Psoas muscle (tissue), 8 donors: ENCODE measurements at regions of chr3 and their contacts with region 1.

Region 1: GRCh38 chr3:71583566-71584449 is at the start of gene FOXP1:
- DNase-seq: peak; percentile 78 to 88
- ATAC-seq: peak; percentile 79 to 86 (median 82)
- H3K4me3 ChIP-seq: peak within 1 kb of the TSS; percentile 95
- H3K27ac ChIP-seq: peak within 1 kb of the TSS; percentile 93
- H3K4me1 ChIP-seq: peaks cover 26% of the 10 kb centered on the region
- H3K27me3 ChIP-seq: no peaks in the 10 kb centered on the region
- CTCF ChIP-seq: no peak
- total RNA-seq, gene FOXP1: 15.4 to 26.4 (median 19.6) TPM

Region 2: DNA sequence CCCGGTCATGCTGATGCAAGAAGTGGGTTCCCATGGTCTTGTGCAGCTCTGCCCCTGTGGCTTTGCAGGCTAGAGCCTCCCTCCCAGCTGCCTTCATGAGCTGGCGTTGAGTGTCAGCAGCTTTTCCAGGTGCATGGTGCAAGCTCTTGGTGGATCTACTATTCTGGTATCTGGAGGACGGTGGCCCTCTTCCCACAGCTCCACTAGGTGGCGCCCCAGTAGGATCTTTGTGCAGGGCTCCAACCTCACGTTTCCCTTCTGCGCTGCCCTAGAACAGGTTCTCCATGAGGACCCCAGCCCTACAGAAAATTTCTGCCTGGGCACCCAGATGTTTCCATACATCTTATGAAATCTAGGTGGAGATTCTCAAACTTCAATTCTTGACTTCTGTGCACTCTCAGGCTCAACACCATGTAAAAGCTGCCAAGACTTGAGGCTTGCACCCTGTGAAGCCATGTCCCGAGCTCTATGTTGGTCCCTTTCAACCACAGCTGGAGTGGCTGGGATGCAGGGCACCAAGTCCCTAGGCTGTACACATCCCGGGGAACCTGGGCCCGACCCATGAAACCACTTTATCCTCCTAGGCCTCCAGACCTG is 1033.0 kb before region 1 on chr3:
- intact Hi-C with region 1: loop called (anchors 5 to 10 kb)
- DNase-seq: peak; percentile 65 to 75
- ATAC-seq: peak in 3 of 4 donors; percentile 55 to 81 (median 68)
- H3K4me3 ChIP-seq: no peak overlapping the region
- H3K27ac ChIP-seq: no peak overlapping the region
- H3K4me1 ChIP-seq: no peaks in the 10 kb centered on the region
- H3K27me3 ChIP-seq: no peaks in the 10 kb centered on the region
- CTCF ChIP-seq: peak; percentile 65

Region 3: GRCh38 chr3:71006810-71007785 is 576.7 kb before region 1 on chr3:
- intact Hi-C with region 1: loop called (anchors 1 to 5 kb)
- DNase-seq: no peak
- ATAC-seq: peak in 3 of 4 donors; percentile 60 to 82 (median 76)
- H3K4me3 ChIP-seq: no peak overlapping the region
- H3K27ac ChIP-seq: peak overlapping the region; percentile 68
- H3K4me1 ChIP-seq: peaks cover 32% of the 10 kb centered on the region
- H3K27me3 ChIP-seq: no peaks in the 10 kb centered on the region
- CTCF ChIP-seq: peak; percentile 52

Region 4: GRCh38 chr3:71247221-71247976 is 336.4 kb before region 1 on chr3:
- intact Hi-C with region 1: loop called in 1 of 2 experiments (anchors 10 kb)
- DNase-seq: no peak
- ATAC-seq: peak in 2 of 4 donors; percentile 50 to 68
- H3K4me3 ChIP-seq: no peak overlapping the region
- H3K27ac ChIP-seq: no peak overlapping the region
- H3K4me1 ChIP-seq: peaks cover 5% of the 10 kb centered on the region
- H3K27me3 ChIP-seq: no peaks in the 10 kb centered on the region
- CTCF ChIP-seq: no peak

Region 5: DNA sequence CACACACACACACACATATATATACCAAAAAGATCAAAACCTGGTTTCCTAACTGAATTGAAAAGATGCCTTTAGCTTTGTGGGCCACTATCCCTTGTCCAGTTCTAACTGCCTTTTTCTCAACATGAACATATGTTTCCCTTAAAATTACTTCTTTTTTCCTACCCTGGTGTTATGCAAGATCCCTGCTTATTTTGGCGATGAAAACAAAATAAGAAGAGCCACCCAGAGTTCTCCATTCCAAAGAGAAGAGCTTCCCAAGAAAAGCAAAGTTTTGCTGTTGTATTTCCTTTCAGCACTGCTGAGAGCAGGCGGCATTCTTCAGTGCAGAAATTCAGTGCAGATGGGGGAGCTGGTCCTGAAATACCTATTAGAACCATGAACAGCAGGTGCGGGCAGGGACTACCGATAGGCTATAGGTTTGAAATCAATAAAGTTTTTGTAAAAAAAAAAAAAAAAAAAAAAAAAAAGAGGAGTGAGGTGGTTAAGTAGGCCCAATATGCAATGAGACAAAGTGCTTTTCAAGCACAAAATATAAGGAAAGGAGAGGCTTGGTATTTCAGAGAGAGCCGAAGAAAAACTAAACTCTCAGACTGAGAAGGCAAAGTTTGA is 238.3 kb before region 1 on chr3:
- intact Hi-C with region 1: no loop called
- DNase-seq: no peak
- ATAC-seq: no peak
- H3K4me3 ChIP-seq: no peak overlapping the region
- H3K27ac ChIP-seq: no peak overlapping the region
- H3K4me1 ChIP-seq: no peaks in the 10 kb centered on the region
- H3K27me3 ChIP-seq: no peaks in the 10 kb centered on the region
- CTCF ChIP-seq: no peak

Region 6: GRCh38 chr3:71389911-71390573 is 193.8 kb before region 1 on chr3:
- intact Hi-C with region 1: loop called in 1 of 2 experiments (anchors 5 kb)
- DNase-seq: peak; percentile 18 to 55
- ATAC-seq: peak in 3 of 4 donors; percentile 21 to 84 (median 77)
- H3K4me3 ChIP-seq: peak overlapping the region; percentile 21
- H3K27ac ChIP-seq: peak overlapping the region; percentile 50
- H3K4me1 ChIP-seq: peaks cover 17% of the 10 kb centered on the region
- H3K27me3 ChIP-seq: no peaks in the 10 kb centered on the region
- CTCF ChIP-seq: no peak

Region 7: GRCh38 chr3:71542521-71543370 is 41.1 kb before region 1 on chr3:
- intact Hi-C with region 1: loop called in 1 of 2 experiments (anchors 5 kb)
- DNase-seq: peak; percentile 81 to 90
- ATAC-seq: peak; percentile 99 to 100 (median 100)
- H3K4me3 ChIP-seq: peak overlapping the region; percentile 48
- H3K27ac ChIP-seq: peak overlapping the region; percentile 73
- H3K4me1 ChIP-seq: peaks cover 17% of the 10 kb centered on the region
- H3K27me3 ChIP-seq: no peaks in the 10 kb centered on the region
- CTCF ChIP-seq: no peak

Region 8: GRCh38 chr3:71616571-71617101 is 32.8 kb after region 1 on chr3:
- intact Hi-C with region 1: no loop called
- DNase-seq: no peak
- ATAC-seq: no peak
- H3K4me3 ChIP-seq: no peak overlapping the region
- H3K27ac ChIP-seq: no peak overlapping the region
- H3K4me1 ChIP-seq: no peaks in the 10 kb centered on the region
- H3K27me3 ChIP-seq: peaks cover 0 to 2% (median 0%) of the 10 kb centered on the region in 3 donors
- CTCF ChIP-seq: no peak